ENCODE measurements at regions of chr2 and their contacts with region 1.

Region 1: DNA sequence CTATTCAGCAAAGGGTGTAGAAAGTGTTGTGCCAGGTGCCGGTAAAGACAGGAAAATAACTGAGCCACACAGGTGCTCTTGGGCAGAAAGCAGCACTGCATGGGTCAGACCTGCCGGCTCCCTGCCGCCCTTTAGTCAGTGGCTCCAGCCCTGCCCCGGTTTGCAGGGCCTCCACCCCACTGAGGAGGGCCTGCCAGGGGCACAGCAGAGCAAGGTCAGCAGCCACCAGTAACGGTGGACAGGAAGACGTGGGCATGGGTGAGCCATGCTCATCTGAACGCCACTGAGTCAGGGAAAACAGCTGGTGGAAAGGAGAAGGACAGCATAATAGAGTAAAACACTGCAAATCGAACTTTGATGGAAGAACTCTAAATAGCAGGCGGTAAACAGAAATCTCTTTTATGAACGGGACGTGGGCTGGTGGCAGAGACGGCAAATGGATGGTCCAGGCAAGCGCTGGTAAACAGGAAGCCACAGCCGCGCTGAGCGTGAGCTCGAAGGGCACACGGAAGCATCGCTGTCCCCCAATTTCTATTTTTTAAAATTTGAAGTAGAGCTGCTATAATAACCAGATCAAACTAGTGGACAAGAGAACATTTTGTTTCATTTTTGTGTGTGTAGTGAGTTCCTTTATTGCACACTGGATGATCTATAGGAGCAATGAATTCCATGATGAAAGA is 141.8 kb upstream of the ALKAL2 start:
- DNase-seq: peak; percentile 32
- H3K4me3 Mint-ChIP-seq: peak overlapping the region; percentile 68
- H3K27ac Mint-ChIP-seq: peak overlapping the region; percentile 65
- H3K4me1 Mint-ChIP-seq: peaks cover 19% of the 10 kb centered on the region
- H3K27me3 Mint-ChIP-seq: no peaks in the 10 kb centered on the region

Region 2: GRCh38 chr2:317501-318424 is 112.0 kb before region 1 on chr2:
- CTCF ChIA-PET with region 1: no interaction called
- POLR2A ChIA-PET with region 1: no interaction called
- intact Hi-C with region 1: loop called (anchors 5 kb)
- DNase-seq: peak; percentile 65
- H3K4me3 Mint-ChIP-seq: peak overlapping the region; percentile 53
- H3K27ac Mint-ChIP-seq: peak overlapping the region; percentile 91
- H3K4me1 Mint-ChIP-seq: peaks cover 20% of the 10 kb centered on the region
- H3K27me3 Mint-ChIP-seq: peaks cover 19% of the 10 kb centered on the region

Region 3: DNA sequence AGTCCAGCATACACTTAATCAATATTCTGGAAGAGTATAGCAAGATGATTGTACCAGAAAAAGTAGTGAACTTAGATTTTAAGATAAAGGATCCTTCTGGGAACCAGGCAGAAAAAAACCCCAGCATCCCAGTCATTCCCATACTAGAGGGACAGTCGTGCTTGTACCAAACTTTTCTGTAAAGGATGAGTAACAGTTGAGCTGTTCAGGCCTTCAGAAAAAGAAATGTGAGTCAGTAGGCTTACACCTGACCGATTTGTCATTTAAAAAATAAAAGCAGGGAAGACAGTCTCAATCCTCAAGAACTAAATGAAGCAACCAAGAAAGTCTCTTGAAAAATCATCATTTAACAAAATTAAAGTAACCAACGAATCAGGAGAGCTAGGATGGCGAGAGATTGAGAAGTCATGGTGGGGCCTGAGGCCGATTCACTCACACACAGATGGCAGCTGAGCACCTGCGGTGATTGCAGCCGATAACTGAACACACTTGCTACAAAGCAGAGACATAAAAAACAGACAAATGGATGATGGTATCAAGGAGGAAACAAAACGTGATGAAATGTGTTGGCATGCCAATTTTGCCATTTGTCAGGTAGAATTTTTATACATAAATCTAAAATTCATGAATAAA is 28.2 kb after region 1 on chr2:
- CTCF ChIA-PET with region 1: no interaction called
- POLR2A ChIA-PET with region 1: no interaction called
- intact Hi-C with region 1: no loop called
- DNase-seq: no peak
- H3K4me3 Mint-ChIP-seq: no peak overlapping the region
- H3K27ac Mint-ChIP-seq: no peak overlapping the region
- H3K4me1 Mint-ChIP-seq: peaks cover 36% of the 10 kb centered on the region
- H3K27me3 Mint-ChIP-seq: peaks cover 53% of the 10 kb centered on the region

Measured in activated CD4-positive, alpha-beta memory T cell treated with anti-CD3 and anti-CD28 coated beads for 36 hours (primary cell).